A549 (cell line): ENCODE measurements at regions of chr3 and their contacts with region 1.

Region 1: DNA sequence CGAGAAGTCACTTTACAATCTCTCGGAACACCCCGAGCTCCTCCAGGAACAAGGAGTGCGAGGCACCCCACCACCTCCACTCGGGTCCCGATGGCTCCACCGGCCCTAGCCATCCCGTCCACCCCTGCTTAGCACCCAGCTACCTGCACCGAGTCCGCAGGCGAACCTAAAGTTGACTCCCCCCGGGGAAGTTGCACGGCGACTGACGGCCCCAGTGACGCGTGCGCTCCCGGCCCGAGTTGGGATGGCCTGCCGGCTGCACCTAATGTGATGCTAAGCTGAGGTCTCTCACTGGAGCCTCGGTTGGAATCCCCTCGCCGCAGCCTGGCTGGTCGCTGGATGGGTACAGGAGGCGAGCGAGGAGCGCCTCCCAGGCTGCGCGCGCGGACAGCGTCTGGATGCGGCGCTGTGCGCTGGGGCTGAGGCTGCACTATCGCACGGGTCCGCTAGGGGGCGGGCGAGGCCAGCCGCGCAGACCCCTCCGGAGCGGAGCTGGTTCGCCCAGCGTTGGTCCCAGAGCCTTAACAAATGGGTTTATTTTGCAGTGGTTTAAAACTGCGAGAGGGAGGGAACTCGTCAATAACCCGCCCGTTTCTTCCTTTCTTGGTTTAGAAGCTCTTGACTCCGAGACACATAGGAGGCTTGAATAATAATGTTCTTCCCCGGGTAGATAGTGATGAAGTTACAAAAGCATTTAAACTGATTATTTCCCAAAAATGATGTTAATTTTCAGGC is at the start of gene OXTR:
- DNase-seq: peak; percentile 66 to 78
- ATAC-seq: peak; percentile 93 to 99
- H3K4me3 ChIP-seq: peak within 1 kb of the TSS; percentile 52
- H3K27ac ChIP-seq: peak within 1 kb of the TSS; percentile 68 to 83
- H3K4me1 ChIP-seq: no peaks in the 10 kb centered on the region
- CTCF ChIP-seq: peak; percentile 98
- EP300 ChIP-seq: no peak
- POLR2A ChIP-seq: no peak
- RAD21 ChIP-seq: peak; percentile 90 to 98
- polyA plus RNA-seq, gene OXTR: 2.1 TPM in 2 replicates

Region 2: GRCh38 chr3:8653800-8654408 is 115.4 kb before region 1 on chr3:
- CTCF ChIA-PET with region 1: no interaction called
- POLR2A ChIA-PET with region 1: no interaction called
- DNase-seq: no peak
- ATAC-seq: no peak
- H3K4me3 ChIP-seq: no peak overlapping the region
- H3K27ac ChIP-seq: no peak overlapping the region
- H3K4me1 ChIP-seq: peaks cover 13% of the 10 kb centered on the region
- CTCF ChIP-seq: no peak
- EP300 ChIP-seq: no peak
- POLR2A ChIP-seq: no peak
- RAD21 ChIP-seq: no peak

Region 3: GRCh38 chr3:8733332-8734094 is 35.7 kb before region 1 on chr3 and contains the start of gene CAV3:
- CTCF ChIA-PET with region 1: interaction called, 48 read pairs
- POLR2A ChIA-PET with region 1: no interaction called
- DNase-seq: no peak
- ATAC-seq: no peak
- H3K4me3 ChIP-seq: no peak within 1 kb of the TSS
- H3K27ac ChIP-seq: peak within 1 kb of the TSS in 1 of 2 experiments; percentile 41; a peak in 1 of 6 replicates
- H3K4me1 ChIP-seq: no peaks in the 10 kb centered on the region
- CTCF ChIP-seq: no peak
- EP300 ChIP-seq: no peak
- POLR2A ChIP-seq: no peak
- RAD21 ChIP-seq: no peak
- polyA plus RNA-seq, gene CAV3: not detected in 2 replicates

Region 4: DNA sequence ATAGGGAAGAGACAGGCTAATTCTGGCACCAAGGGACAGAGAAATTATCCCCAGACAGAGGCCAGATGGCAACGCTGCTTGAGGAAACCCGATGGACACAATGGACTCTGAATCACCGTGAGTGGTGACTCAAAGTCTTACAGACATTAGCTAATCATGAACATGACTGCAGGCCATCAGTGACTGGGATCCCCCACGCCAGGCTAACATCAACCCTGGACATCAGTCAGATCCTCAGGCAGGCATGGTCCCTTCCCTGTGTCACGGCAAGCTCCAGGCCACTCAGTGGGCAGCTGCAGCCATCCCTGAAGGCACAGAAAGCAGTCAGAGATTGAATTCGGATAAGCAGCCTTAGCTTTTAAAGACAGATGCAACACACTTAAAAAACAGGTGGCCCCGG is 24.0 kb after region 1 on chr3:
- CTCF ChIA-PET with region 1: interaction called, 35 read pairs
- POLR2A ChIA-PET with region 1: no interaction called
- DNase-seq: peak; percentile 68 to 73
- ATAC-seq: peak; percentile 92 to 98
- H3K4me3 ChIP-seq: no peak overlapping the region
- H3K27ac ChIP-seq: peak overlapping the region; percentile 50 to 65
- H3K4me1 ChIP-seq: peaks cover 17% of the 10 kb centered on the region
- CTCF ChIP-seq: no peak
- EP300 ChIP-seq: no peak
- POLR2A ChIP-seq: no peak
- RAD21 ChIP-seq: 0 out of 5 replicates have a peak, but pooled peaks of 1 of the 2 experiments have one; percentile 12

Region 5: DNA sequence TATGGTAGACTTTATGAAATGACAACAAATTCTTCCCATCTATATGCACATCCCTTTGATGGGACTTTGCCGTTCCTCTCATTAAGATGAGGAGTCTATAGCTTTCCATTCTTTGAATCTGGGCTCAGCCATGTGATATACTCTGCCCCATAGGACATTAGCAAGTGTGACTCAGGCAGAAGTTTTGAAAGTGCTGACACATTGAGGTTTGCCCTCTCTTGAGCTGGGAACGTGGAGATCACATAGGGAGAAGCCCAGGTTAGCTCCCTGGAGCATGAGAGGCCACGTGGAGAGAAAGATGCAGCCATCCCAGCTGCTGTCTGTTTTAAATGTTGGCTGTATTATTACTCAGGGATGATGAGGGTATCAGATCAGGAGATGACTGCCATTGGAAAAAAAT is 67.9 kb after region 1 on chr3:
- CTCF ChIA-PET with region 1: interaction called, 10 read pairs
- POLR2A ChIA-PET with region 1: no interaction called
- DNase-seq: no peak
- ATAC-seq: peak; percentile 37 to 63; a peak in 3 of 6 replicates
- H3K4me3 ChIP-seq: no peak overlapping the region
- H3K27ac ChIP-seq: 0 out of 6 replicates have a peak overlapping the region, but pooled peaks of 1 of the 2 experiments have one; percentile 10
- H3K4me1 ChIP-seq: peaks cover 15% of the 10 kb centered on the region
- CTCF ChIP-seq: no peak
- EP300 ChIP-seq: no peak
- POLR2A ChIP-seq: no peak
- RAD21 ChIP-seq: no peak

Region 6: DNA sequence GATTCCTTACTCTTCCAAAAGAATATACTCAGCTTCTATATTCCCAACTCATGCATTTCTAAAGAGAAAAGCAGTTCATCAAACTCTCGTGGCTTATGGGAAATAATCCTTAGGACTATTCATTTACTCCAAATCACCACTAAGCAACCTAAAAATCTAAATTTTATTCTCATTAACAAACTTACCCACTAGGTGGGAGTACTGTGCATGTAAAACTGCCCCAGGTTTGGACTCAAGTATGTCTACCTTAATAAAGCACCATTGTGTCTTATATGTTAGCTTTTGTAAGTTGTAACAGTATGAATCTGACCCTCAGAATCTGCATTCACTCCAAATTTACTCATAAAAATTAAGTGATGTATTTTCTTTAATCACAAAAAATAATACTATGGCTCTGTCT is 168.8 kb after region 1 on chr3:
- CTCF ChIA-PET with region 1: interaction called, 31 read pairs
- POLR2A ChIA-PET with region 1: no interaction called
- DNase-seq: peak; percentile 21 to 53
- ATAC-seq: peak; percentile 75 to 79
- H3K4me3 ChIP-seq: no peak overlapping the region
- H3K27ac ChIP-seq: peak overlapping the region; percentile 77 to 91
- H3K4me1 ChIP-seq: peaks cover 31% of the 10 kb centered on the region
- CTCF ChIP-seq: peak; percentile 56
- EP300 ChIP-seq: no peak
- POLR2A ChIP-seq: no peak
- RAD21 ChIP-seq: peak; percentile 36 to 47; a peak in 3 of 5 replicates

Region 7: DNA sequence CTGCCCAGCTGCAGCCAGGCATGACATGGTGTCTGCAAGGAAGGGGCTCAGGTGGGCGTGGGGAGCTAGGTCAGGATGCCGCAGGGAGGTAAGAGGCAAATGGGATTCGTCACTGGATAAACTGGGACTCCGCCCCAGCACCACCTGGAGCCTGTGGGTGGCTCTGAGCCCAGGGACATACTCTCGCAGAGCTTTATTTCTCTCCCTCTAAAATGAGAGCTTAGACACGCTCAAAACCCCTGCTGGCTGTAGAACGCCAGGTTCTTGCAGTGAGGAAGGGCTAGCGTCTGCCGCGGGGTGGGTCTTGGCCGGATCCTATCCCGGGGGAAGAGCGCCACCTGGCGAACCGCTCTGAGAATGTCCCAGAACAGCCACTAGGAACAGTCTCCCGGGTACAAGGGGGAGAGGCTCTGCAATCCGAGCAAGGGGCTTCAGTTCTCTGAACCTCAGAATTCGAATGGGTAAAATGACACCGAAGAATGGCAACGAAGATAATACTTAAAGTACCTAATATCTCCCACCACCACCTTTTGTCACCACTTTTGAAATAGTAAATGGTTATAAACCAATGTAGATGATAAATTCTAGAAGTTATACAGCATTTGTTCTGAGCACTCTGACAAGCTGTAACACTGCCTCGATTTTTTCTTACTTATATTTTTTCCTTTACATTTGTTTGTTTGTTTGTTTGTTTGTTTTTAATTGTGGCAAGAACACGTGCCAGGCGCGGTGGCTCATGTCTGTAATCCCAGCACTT is 533.3 kb after region 1 on chr3:
- CTCF ChIA-PET with region 1: interaction called, 19 read pairs
- POLR2A ChIA-PET with region 1: no interaction called
- DNase-seq: peak; percentile 72 to 79
- ATAC-seq: peak; percentile 95 to 99
- H3K4me3 ChIP-seq: no peak overlapping the region
- H3K27ac ChIP-seq: no peak overlapping the region
- H3K4me1 ChIP-seq: no peaks in the 10 kb centered on the region
- CTCF ChIP-seq: peak; percentile 92
- EP300 ChIP-seq: no peak
- POLR2A ChIP-seq: no peak
- RAD21 ChIP-seq: peak; percentile 96